ENCODE measurements at regions of chr4 and their contacts with region 1.

Region 1: DNA sequence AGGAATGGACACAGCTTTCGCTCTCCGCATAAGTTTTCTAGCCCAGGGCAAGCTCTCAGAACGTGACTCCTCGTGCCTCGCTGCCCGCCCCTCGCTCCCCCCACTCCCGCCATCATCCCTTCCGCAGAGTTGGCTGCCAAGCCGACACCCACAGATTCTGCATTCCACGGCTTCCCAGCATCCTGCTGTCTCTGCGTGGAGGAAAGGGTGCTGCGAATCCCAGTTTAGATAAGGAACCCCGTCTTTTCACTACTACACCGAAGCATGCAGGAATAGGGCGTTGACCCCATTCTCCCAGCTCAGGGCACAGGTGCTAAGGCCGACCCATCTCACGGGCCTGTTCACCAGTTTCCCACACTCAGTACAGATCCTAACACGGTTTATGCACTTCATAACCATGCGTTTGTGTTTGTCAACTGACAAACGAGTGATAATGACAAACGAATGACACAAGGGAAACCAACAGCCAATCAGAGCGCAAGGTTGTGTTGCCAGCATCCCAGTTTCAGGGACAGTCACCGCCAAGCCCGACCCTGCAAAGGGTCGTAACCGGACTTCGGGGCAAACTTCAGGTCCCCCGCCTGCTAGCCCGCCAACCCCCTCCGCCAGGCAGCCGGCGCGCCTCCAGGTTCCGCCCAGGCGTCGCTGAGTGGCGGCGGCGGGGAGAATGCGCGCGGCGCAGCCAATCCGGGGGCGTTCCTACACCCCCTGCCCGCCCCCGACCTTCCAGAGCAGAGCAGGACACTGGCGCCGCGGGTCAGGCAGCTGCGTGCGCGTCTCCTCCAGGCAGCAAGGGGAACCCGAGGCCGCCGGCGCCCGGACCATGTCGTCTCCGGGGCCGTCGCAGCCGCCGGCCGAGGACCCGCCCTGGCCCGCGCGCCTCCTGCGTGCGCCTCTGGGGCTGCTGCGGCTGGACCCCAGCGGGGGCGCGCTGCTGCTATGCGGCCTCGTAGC is at the start of gene CYP2U1:
- DNase-seq: peak; percentile 80 to 87
- ATAC-seq: peak; percentile 95 to 98 (median 96)
- H3K4me3 ChIP-seq: peak within 1 kb of the TSS; percentile 76
- H3K4me3 Mint-ChIP-seq: peak within 1 kb of the TSS; percentile 92
- H3K27ac ChIP-seq: peak within 1 kb of the TSS; percentile 63
- H3K27ac Mint-ChIP-seq: peak within 1 kb of the TSS; percentile 67 to 89
- H3K4me1 ChIP-seq: peaks cover 14% of the 10 kb centered on the region
- H3K4me1 Mint-ChIP-seq: peaks cover 22 to 30% of the 10 kb centered on the region in 2 donors
- H3K27me3 ChIP-seq: no peaks in the 10 kb centered on the region
- H3K27me3 Mint-ChIP-seq: peaks cover 0 to 11% of the 10 kb centered on the region in 2 donors
- CTCF ChIP-seq: no peak
- total RNA-seq, gene CYP2U1: 2.5 to 4.5 (median 3.4) TPM

Region 2: GRCh38 chr4:107719922-107720722 is 211.0 kb before region 1 on chr4 and contains the start of gene PAPSS1:
- intact Hi-C with region 1: loop called (anchors 1 kb)
- DNase-seq: peak; percentile 91 to 99
- ATAC-seq: peak; percentile 86 to 98 (median 90)
- H3K4me3 ChIP-seq: peak within 1 kb of the TSS; percentile 76
- H3K4me3 Mint-ChIP-seq: peak within 1 kb of the TSS; percentile 97
- H3K27ac ChIP-seq: peak within 1 kb of the TSS; percentile 75
- H3K27ac Mint-ChIP-seq: peak within 1 kb of the TSS; percentile 90 to 95
- H3K4me1 ChIP-seq: peaks cover 18% of the 10 kb centered on the region
- H3K4me1 Mint-ChIP-seq: peaks cover 29 to 37% of the 10 kb centered on the region in 2 donors
- H3K27me3 ChIP-seq: no peaks in the 10 kb centered on the region
- H3K27me3 Mint-ChIP-seq: peaks cover 4 to 5% of the 10 kb centered on the region in 2 donors
- CTCF ChIP-seq: no peak
- total RNA-seq, gene PAPSS1: 10.2 to 21.3 (median 12.9) TPM

Region 3: DNA sequence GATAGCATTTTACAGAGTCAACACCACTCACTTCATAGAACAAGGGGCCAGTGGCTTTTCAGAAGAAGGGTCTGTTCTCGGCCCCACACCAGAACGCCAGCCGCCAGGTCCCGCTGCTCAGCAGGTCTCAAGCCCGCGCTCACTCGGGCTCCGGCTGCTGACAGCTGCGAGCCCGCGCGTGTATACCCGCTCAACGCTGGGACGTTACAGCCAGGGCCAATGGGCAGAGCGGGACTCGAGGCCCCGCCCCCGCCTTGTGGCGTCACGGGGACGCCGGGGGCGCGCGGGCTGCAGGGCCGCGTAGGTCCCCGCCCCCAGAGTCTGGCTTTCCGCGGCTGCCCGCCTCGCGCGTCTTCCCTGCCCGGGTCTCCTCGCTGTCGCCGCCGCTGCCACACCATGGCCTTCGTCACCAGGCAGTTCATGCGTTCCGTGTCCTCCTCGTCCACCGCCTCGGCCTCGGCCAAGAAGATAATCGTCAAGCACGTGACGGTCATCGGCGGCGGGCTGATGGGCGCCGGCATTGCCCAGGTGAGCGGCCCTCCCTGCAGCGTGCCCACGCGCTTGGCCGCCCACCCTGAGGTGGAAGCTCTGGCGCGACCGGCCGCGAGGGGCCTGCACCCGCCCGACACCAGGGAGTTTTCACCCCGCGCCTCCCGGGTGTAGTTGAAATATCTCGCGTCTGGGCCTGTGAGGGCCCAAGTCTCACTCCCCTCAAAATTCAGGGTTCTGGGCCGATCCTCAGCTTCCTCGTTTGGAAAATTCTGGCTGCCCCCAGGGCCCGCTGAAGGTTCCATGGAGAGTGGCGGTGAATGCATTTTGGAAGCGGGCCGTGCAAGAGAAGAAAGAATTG is 58.7 kb after region 1 on chr4 and contains the start of gene HADH:
- intact Hi-C with region 1: loop called (anchors 1 kb)
- DNase-seq: peak; percentile 97
- ATAC-seq: peak; percentile 98 to 100 (median 99)
- H3K4me3 ChIP-seq: peak within 1 kb of the TSS; percentile 63
- H3K4me3 Mint-ChIP-seq: peak within 1 kb of the TSS; percentile 89
- H3K27ac ChIP-seq: peak within 1 kb of the TSS; percentile 64
- H3K27ac Mint-ChIP-seq: peak within 1 kb of the TSS; percentile 89 to 94
- H3K4me1 ChIP-seq: peaks cover 10% of the 10 kb centered on the region
- H3K4me1 Mint-ChIP-seq: peaks cover 29 to 34% of the 10 kb centered on the region in 2 donors
- H3K27me3 ChIP-seq: no peaks in the 10 kb centered on the region
- H3K27me3 Mint-ChIP-seq: no peaks in the 10 kb centered on the region
- CTCF ChIP-seq: no peak
- total RNA-seq, gene HADH: 9.1 to 16.5 (median 14.4) TPM

Region 4: DNA sequence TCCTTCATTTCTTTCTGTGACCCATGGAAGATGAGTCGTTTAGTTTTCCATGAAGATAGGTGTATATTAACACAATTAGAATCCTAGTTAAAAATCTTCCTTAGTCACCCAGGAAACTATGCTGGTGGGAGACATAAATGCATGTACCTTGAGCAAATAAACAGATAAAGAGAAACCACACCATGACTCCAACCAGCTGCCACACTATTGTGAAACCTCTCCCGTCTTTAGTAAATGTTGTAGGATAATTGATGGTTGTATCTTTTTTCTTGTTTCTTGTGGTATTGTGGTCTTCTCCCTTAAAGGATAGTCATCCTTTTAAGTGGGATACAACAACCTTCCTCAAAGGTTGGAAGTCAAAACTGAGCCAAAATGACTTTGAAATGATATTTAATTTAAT is 341.5 kb after region 1 on chr4:
- intact Hi-C with region 1: no loop called
- DNase-seq: no peak
- ATAC-seq: no peak
- H3K4me3 ChIP-seq: no peak overlapping the region
- H3K4me3 Mint-ChIP-seq: no peak overlapping the region
- H3K27ac ChIP-seq: no peak overlapping the region
- H3K27ac Mint-ChIP-seq: no peak overlapping the region
- H3K4me1 ChIP-seq: no peaks in the 10 kb centered on the region
- H3K4me1 Mint-ChIP-seq: no peaks in the 10 kb centered on the region
- H3K27me3 ChIP-seq: no peaks in the 10 kb centered on the region
- H3K27me3 Mint-ChIP-seq: peaks cover 5 to 7% of the 10 kb centered on the region in 2 donors
- CTCF ChIP-seq: no peak

Region 5: GRCh38 chr4:108360754-108361445 is 429.8 kb after region 1 on chr4:
- intact Hi-C with region 1: no loop called
- DNase-seq: no peak
- ATAC-seq: no peak
- H3K4me3 ChIP-seq: no peak overlapping the region
- H3K4me3 Mint-ChIP-seq: no peak overlapping the region
- H3K27ac ChIP-seq: no peak overlapping the region
- H3K27ac Mint-ChIP-seq: no peak overlapping the region
- H3K4me1 ChIP-seq: no peaks in the 10 kb centered on the region
- H3K4me1 Mint-ChIP-seq: peaks cover 0 to 4% of the 10 kb centered on the region in 2 donors
- H3K27me3 ChIP-seq: peaks cover 14% of the 10 kb centered on the region
- H3K27me3 Mint-ChIP-seq: peaks cover 51 to 85% of the 10 kb centered on the region in 2 donors
- CTCF ChIP-seq: no peak

Region 6: GRCh38 chr4:108620101-108620932 is 689.2 kb after region 1 on chr4 and contains the start of gene RPL34:
- intact Hi-C with region 1: loop called (anchors 5 kb)
- DNase-seq: peak; percentile 93 to 100
- ATAC-seq: peak; percentile 99 to 100 (median 100)
- H3K4me3 ChIP-seq: peak within 1 kb of the TSS; percentile 78
- H3K4me3 Mint-ChIP-seq: peak within 1 kb of the TSS; percentile 88
- H3K27ac ChIP-seq: peak within 1 kb of the TSS; percentile 83
- H3K27ac Mint-ChIP-seq: peak within 1 kb of the TSS; percentile 94 to 96
- H3K4me1 ChIP-seq: peaks cover 12% of the 10 kb centered on the region
- H3K4me1 Mint-ChIP-seq: peaks cover 31 to 45% of the 10 kb centered on the region in 2 donors
- H3K27me3 ChIP-seq: no peaks in the 10 kb centered on the region
- H3K27me3 Mint-ChIP-seq: no peaks in the 10 kb centered on the region
- CTCF ChIP-seq: no peak
- total RNA-seq, gene RPL34: 1,002 to 1,285 (median 1,229) TPM